Naive thymus-derived CD4-positive, alpha-beta T cell (primary cell): ENCODE measurements at regions of chr1 and their contacts with region 1.

Region 1: GRCh38 chr1:193019442-193020026 is 39.6 kb downstream of the UCHL5 start:
- DNase-seq: peak in 6 of 9 donors; percentile 14 to 36 (median 22)
- ATAC-seq: peak; percentile 55
- H3K4me3 ChIP-seq: no peak overlapping the region
- H3K4me3 Mint-ChIP-seq: no peak overlapping the region
- H3K27ac ChIP-seq: no peak overlapping the region
- H3K27ac Mint-ChIP-seq: no peak overlapping the region
- H3K4me1 ChIP-seq: no peaks in the 10 kb centered on the region
- H3K4me1 Mint-ChIP-seq: no peaks in the 10 kb centered on the region
- H3K27me3 ChIP-seq: no peaks in the 10 kb centered on the region
- H3K27me3 Mint-ChIP-seq: no peaks in the 10 kb centered on the region

Region 2: DNA sequence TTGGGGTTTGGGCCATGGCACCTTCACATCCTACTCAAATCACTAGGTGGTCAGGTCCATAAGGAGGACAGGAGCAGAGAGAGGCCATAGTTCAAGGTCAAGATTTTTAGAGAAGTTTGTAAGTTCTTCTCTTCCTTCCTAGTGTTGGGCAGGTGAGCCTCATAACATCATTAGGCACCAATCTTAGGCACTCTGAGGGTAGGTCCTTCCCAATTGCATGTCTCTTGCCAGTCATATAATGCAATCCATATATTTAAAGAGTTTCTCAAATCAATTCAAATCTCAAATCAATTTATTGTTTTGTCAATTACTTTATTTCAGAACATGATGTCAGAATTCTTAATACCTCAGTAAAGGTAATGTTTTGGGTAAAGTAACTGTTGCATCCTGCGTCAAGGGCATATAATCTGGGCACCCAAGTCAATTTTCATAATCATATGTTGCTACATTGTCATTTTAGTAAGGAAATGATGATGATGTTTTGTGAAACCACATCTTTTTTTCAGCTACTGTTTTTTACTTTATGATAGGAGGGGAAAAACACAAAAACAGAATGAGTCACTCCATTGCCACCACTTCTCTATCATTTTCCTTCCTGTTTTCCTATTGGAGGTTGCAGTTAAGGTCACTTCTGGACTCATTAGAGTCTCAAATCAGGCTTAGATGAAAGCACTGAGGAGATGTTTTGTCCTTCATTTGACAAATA is 83.1 kb before region 1 on chr1:
- CTCF ChIA-PET with region 1: no interaction called
- POLR2A ChIA-PET with region 1: no interaction called
- intact Hi-C with region 1: no loop called
- DNase-seq: no peak
- ATAC-seq: peak; percentile 85
- H3K4me3 ChIP-seq: no peak overlapping the region
- H3K4me3 Mint-ChIP-seq: no peak overlapping the region
- H3K27ac ChIP-seq: no peak overlapping the region
- H3K27ac Mint-ChIP-seq: peak overlapping the region in 2 of 9 donors; percentile 47 to 51
- H3K4me1 ChIP-seq: no peaks in the 10 kb centered on the region
- H3K4me1 Mint-ChIP-seq: peaks cover 0 to 20% (median 0%) of the 10 kb centered on the region in 7 donors
- H3K27me3 ChIP-seq: no peaks in the 10 kb centered on the region
- H3K27me3 Mint-ChIP-seq: no peaks in the 10 kb centered on the region

Region 3: GRCh38 chr1:192954705-192955265 is 64.7 kb before region 1 on chr1:
- CTCF ChIA-PET with region 1: no interaction called
- POLR2A ChIA-PET with region 1: no interaction called
- intact Hi-C with region 1: no loop called
- DNase-seq: no peak
- ATAC-seq: peak; percentile 73
- H3K4me3 ChIP-seq: no peak overlapping the region
- H3K4me3 Mint-ChIP-seq: no peak overlapping the region
- H3K27ac ChIP-seq: no peak overlapping the region
- H3K27ac Mint-ChIP-seq: no peak overlapping the region
- H3K4me1 ChIP-seq: no peaks in the 10 kb centered on the region
- H3K4me1 Mint-ChIP-seq: no peaks in the 10 kb centered on the region
- H3K27me3 ChIP-seq: no peaks in the 10 kb centered on the region
- H3K27me3 Mint-ChIP-seq: no peaks in the 10 kb centered on the region

Region 4: GRCh38 chr1:193031438-193031837 is 11.9 kb after region 1 on chr1:
- CTCF ChIA-PET with region 1: no interaction called
- POLR2A ChIA-PET with region 1: no interaction called
- intact Hi-C with region 1: loop called in 1 of 2 experiments (anchors 2 kb)
- DNase-seq: peak in 1 of 9 donors; percentile 2
- ATAC-seq: peak; percentile 54
- H3K4me3 ChIP-seq: no peak overlapping the region
- H3K4me3 Mint-ChIP-seq: no peak overlapping the region
- H3K27ac ChIP-seq: no peak overlapping the region
- H3K27ac Mint-ChIP-seq: no peak overlapping the region
- H3K4me1 ChIP-seq: no peaks in the 10 kb centered on the region
- H3K4me1 Mint-ChIP-seq: peaks cover 10 to 31% (median 29%) of the 10 kb centered on the region in 7 donors
- H3K27me3 ChIP-seq: no peaks in the 10 kb centered on the region
- H3K27me3 Mint-ChIP-seq: no peaks in the 10 kb centered on the region

Region 5: GRCh38 chr1:193183019-193183627 is 163.6 kb after region 1 on chr1:
- CTCF ChIA-PET with region 1: no interaction called
- POLR2A ChIA-PET with region 1: no interaction called
- intact Hi-C with region 1: no loop called
- DNase-seq: peak in 7 of 9 donors; percentile 21 to 62 (median 56)
- ATAC-seq: peak; percentile 85
- H3K4me3 ChIP-seq: no peak overlapping the region
- H3K4me3 Mint-ChIP-seq: no peak overlapping the region
- H3K27ac ChIP-seq: no peak overlapping the region
- H3K27ac Mint-ChIP-seq: no peak overlapping the region
- H3K4me1 ChIP-seq: peaks cover 0 to 8% of the 10 kb centered on the region in 2 donors
- H3K4me1 Mint-ChIP-seq: peaks cover 24 to 77% (median 58%) of the 10 kb centered on the region in 7 donors
- H3K27me3 ChIP-seq: no peaks in the 10 kb centered on the region
- H3K27me3 Mint-ChIP-seq: no peaks in the 10 kb centered on the region